ENCODE measurements at regions of chr3 and their contacts with region 1.

Region 1: DNA sequence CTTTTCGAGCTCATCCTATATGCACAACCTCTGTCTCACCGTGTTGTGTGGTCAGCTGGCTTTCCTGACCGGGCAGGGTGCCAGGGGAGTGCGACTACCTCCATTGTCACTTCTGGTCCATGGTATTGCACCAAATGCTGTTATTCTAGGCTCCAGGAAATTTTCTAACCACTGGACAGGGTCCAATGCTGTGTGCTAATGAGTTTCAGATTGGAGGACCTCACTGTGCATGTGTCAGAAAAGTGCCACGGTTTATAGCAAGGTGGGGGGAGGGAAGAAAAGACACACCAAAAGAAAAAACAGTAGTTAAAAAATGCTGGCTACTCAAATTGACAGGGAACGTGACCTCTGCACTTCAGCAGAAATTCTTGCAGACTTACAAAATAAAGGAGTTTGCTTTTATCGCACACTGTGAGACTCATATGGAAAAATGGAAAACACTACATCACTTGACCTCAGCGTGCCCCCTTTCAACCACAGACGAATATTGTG is 480.1 kb downstream of the FOXP1 start:
- DNase-seq: peak; percentile 94
- H3K4me3 ChIP-seq: no peak overlapping the region
- H3K27ac ChIP-seq: peak overlapping the region; percentile 92
- H3K4me1 ChIP-seq: peaks cover 65% of the 10 kb centered on the region
- H3K27me3 ChIP-seq: no peaks in the 10 kb centered on the region
- CTCF ChIP-seq: no peak
- POLR2A ChIP-seq: no peak

Region 2: DNA sequence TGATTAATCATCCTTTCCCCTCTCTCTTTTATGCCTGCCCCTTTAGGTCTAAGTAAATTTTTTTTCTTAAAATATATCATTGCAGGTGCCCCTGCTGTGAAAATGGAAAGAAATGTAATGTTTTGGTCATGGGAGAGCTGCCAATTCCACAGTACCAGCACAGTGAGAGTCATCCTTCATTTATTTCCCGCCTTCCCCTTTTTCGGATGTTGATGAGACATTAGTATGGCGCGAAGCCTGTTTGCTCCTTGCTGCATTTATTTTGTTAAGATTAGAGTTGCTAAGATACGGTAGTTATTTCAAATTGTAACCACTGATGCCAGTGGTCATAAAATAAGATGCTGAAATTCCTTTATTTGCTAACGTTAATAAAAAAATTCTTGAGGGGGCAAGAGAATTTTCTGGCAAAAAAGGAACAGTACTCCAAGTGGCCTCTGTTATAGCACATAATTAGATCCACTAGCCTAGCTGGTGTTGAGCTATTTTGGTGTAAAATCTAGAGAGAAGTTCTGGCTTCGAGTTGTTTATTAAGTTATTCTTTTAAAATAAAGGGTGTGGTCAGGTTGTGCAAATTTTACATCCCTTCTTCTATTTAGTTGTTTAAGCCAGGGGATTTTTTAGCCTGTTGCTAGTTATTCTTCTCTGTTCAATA is 853.8 kb before region 1 on chr3:
- CTCF ChIA-PET with region 1: no interaction called
- POLR2A ChIA-PET with region 1: no interaction called
- dilution Hi-C with region 1: no loop called
- intact Hi-C with region 1: loop called (anchors 2 kb)
- DNase-seq: peak; percentile 96
- H3K4me3 ChIP-seq: no peak overlapping the region
- H3K27ac ChIP-seq: peak overlapping the region; percentile 87
- H3K4me1 ChIP-seq: peaks cover 34% of the 10 kb centered on the region
- H3K27me3 ChIP-seq: no peaks in the 10 kb centered on the region
- CTCF ChIP-seq: no peak
- POLR2A ChIP-seq: peak; percentile 17

Region 3: DNA sequence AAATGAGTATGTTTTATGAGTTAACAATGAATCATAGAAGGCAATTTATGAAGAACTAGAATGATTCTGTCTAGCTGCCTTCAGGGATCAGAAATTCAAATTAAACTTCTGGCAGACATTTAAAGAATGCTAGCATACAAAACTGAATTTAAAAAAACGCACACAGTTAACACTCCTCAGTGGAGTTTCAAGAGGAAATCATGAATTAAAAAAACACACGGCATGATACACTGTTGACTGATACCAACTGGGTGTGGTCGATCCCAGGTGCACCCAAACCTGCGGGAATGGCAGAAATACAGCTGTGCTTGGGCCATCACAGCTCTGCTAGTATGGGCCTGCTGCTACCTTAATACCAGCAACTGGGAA is 46.0 kb before region 1 on chr3:
- CTCF ChIA-PET with region 1: interaction called, 4 read pairs
- POLR2A ChIA-PET with region 1: no interaction called
- dilution Hi-C with region 1: no loop called
- intact Hi-C with region 1: loop called (anchors 2 kb)
- DNase-seq: peak; percentile 61
- H3K4me3 ChIP-seq: peak overlapping the region in 1 of 3 experiments; percentile 3
- H3K27ac ChIP-seq: peak overlapping the region; percentile 92
- H3K4me1 ChIP-seq: peaks cover 98% of the 10 kb centered on the region
- H3K27me3 ChIP-seq: no peaks in the 10 kb centered on the region
- CTCF ChIP-seq: no peak
- POLR2A ChIP-seq: no peak

Region 4: DNA sequence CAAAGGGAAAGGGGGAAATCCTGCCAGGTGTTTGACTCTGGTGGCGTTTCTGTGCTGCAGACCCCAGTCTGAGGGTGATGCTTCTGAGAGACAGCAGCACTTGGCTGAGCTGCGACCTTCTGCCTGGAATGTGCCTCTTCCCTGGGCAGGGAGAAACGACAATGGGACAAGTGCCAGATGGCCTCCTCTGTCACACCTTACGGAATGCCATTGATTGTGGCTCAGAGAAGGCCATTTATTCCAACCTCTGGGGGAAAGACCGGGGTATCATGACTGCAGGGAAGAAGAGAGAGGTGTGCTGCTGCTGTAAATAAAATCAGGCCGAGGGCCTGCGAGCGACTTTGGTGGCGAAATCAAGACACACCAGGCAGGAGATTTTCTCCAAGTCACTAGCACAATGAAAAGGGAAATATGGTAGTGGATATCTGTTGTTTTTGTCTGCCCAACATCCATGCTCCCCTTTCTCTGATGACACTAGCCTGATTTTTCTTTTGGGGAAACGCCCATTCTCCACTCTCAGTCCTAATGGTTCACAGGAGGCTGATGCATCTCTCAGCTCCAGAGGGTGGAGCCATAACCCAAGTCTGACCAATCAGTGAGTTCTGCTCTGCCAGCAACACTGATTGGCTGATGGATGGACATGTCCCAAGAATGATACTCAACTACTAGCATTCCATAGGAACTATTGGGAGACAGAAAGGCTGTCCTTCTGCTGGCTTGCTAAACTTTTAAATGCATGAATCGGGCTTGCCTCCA is 143.9 kb after region 1 on chr3:
- CTCF ChIA-PET with region 1: no interaction called
- POLR2A ChIA-PET with region 1: interaction called, 4 read pairs
- dilution Hi-C with region 1: no loop called
- intact Hi-C with region 1: loop called (anchors 2 kb)
- DNase-seq: no peak
- H3K4me3 ChIP-seq: no peak overlapping the region
- H3K27ac ChIP-seq: no peak overlapping the region
- H3K4me1 ChIP-seq: peaks cover 34% of the 10 kb centered on the region
- H3K27me3 ChIP-seq: no peaks in the 10 kb centered on the region
- CTCF ChIP-seq: no peak
- POLR2A ChIP-seq: no peak

Region 5: GRCh38 chr3:71537211-71537611 is 433.7 kb after region 1 on chr3:
- CTCF ChIA-PET with region 1: no interaction called
- POLR2A ChIA-PET with region 1: no interaction called
- dilution Hi-C with region 1: no loop called
- intact Hi-C with region 1: loop called (anchors 5 kb)
- DNase-seq: peak; percentile 98
- H3K4me3 ChIP-seq: no peak overlapping the region
- H3K27ac ChIP-seq: peak overlapping the region; percentile 60
- H3K4me1 ChIP-seq: peaks cover 56% of the 10 kb centered on the region
- H3K27me3 ChIP-seq: no peaks in the 10 kb centered on the region
- CTCF ChIP-seq: no peak
- POLR2A ChIP-seq: no peak